Activated CD8-positive, alpha-beta T cell treated with anti-CD3 and anti-CD28 coated beads, Interleukin-2, amount 10 ng/mL, durations not matched to agents 7 days and 5 days (primary cell): ENCODE measurements at regions of chr15 and their contacts with region 1.

Region 1: GRCh38 chr15:55649054-55649423 is 60.9 kb upstream of the PYGO1 start:
- DNase-seq: no peak
- ATAC-seq: no peak
- H3K4me3 Mint-ChIP-seq: no peak overlapping the region
- H3K27ac Mint-ChIP-seq: no peak overlapping the region
- H3K4me1 Mint-ChIP-seq: no peaks in the 10 kb centered on the region
- H3K27me3 Mint-ChIP-seq: no peaks in the 10 kb centered on the region

Region 2: DNA sequence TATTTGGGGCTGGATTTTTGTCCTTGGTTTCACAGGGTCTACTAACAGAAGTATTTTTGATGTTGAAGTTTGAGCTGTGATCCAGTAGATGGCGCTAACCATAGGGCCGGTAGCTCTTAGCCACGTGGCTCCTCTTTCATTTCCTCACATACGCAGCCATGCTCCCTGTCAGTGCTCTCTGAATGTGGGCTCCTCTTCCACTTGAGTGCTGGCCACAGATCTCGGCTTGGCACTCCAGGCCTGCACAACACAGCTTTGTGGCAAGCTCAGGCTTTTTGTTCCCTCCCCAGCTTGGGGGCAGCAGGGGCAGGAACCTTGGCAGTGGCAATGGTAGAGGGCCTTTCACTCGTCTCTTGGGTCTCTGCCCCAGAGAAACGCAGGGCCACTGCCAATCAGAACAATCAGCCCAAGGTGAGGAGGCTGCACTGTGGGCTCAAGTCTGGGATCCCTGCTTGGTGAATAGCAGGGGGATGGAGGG is 122.4 kb before region 1 on chr15:
- CTCF ChIA-PET with region 1: interaction called, 10 read pairs
- POLR2A ChIA-PET with region 1: no interaction called
- DNase-seq: peak; percentile 31
- ATAC-seq: peak; percentile 70
- H3K4me3 Mint-ChIP-seq: no peak overlapping the region
- H3K27ac Mint-ChIP-seq: no peak overlapping the region
- H3K4me1 Mint-ChIP-seq: peaks cover 2% of the 10 kb centered on the region
- H3K27me3 Mint-ChIP-seq: peaks cover 30% of the 10 kb centered on the region

Region 3: GRCh38 chr15:55799291-55800212 is 150.5 kb after region 1 on chr15:
- CTCF ChIA-PET with region 1: interaction called, 27 read pairs
- POLR2A ChIA-PET with region 1: no interaction called
- DNase-seq: peak; percentile 30
- ATAC-seq: no peak
- H3K4me3 Mint-ChIP-seq: no peak overlapping the region
- H3K27ac Mint-ChIP-seq: no peak overlapping the region
- H3K4me1 Mint-ChIP-seq: peaks cover 3% of the 10 kb centered on the region
- H3K27me3 Mint-ChIP-seq: peaks cover 9% of the 10 kb centered on the region